CD4-positive, alpha-beta T cell (primary cell): ENCODE measurements at regions of chr9 and their contacts with region 1.

Region 1: GRCh38 chr9:113511856-113512761 is 48.6 kb downstream of the RGS3 start:
- DNase-seq: peak in 13 of 14 experiments; percentile 33 to 84 (median 52)
- ATAC-seq: peak; percentile 60
- H3K4me3 ChIP-seq: peak overlapping the region; percentile 27
- H3K4me3 Mint-ChIP-seq: peak overlapping the region; percentile 84
- H3K27ac ChIP-seq: peak overlapping the region; percentile 71 to 77
- H3K27ac Mint-ChIP-seq: peak overlapping the region; percentile 86
- H3K4me1 ChIP-seq: peaks cover 58% of the 10 kb centered on the region
- H3K4me1 Mint-ChIP-seq: peaks cover 62% of the 10 kb centered on the region
- H3K27me3 ChIP-seq: no peaks in the 10 kb centered on the region
- H3K27me3 Mint-ChIP-seq: no peaks in the 10 kb centered on the region
- CTCF ChIP-seq: no peak

Region 2: GRCh38 chr9:113488490-113488889 is 23.6 kb before region 1 on chr9:
- CTCF ChIA-PET with region 1: no interaction called
- POLR2A ChIA-PET with region 1: no interaction called
- intact Hi-C with region 1: no loop called
- DNase-seq: no peak
- ATAC-seq: no peak
- H3K4me3 ChIP-seq: no peak overlapping the region
- H3K4me3 Mint-ChIP-seq: no peak overlapping the region
- H3K27ac ChIP-seq: no peak overlapping the region
- H3K27ac Mint-ChIP-seq: no peak overlapping the region
- H3K4me1 ChIP-seq: no peaks in the 10 kb centered on the region
- H3K4me1 Mint-ChIP-seq: no peaks in the 10 kb centered on the region
- H3K27me3 ChIP-seq: no peaks in the 10 kb centered on the region
- H3K27me3 Mint-ChIP-seq: no peaks in the 10 kb centered on the region
- CTCF ChIP-seq: no peak

Region 3: DNA sequence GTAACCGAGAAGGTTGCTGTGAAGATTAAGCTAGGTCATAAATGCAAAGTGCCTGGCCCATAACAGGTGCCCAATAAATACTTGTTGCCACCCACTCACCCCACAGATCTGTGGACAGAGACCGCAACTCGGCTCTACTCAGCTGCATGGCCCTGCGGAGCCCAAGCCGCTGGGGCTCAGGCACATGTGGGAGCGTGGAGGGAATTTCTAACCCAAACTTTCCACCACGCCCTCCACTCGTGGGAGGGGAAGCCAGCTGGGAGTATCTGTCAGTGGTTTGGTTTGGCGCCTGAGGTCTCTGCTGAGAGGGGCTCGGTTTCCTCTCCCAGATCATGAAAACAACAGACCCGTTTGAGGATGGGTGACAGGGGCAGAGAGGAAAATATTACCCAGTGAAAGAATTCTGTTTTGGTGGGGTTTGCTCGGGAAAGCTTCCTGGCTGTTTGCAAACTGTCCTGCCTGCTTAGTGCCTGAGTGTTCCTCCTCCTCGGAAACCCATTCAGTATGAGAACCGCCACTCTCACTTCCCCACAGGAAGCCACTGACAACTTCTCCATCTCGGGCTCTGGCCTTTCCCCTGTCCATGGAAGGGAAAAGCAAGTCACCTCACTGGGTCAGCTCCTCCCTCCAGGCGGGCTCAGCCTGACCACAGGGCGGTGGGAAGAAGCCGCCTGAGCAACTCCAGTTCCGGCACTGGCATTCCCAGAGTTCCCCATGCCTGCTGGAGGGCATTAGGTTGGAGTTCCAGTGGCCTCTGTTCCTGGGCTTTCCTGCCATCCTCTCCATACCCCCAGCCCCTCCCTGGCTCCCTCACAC is 11.5 kb after region 1 on chr9:
- CTCF ChIA-PET with region 1: no interaction called
- POLR2A ChIA-PET with region 1: interaction called, 34 read pairs
- intact Hi-C with region 1: no loop called
- DNase-seq: peak in 11 of 14 experiments; percentile 11 to 82 (median 47)
- ATAC-seq: peak; percentile 50
- H3K4me3 ChIP-seq: peak overlapping the region; percentile 27
- H3K4me3 Mint-ChIP-seq: peak overlapping the region; percentile 70
- H3K27ac ChIP-seq: peak overlapping the region; percentile 30 to 59
- H3K27ac Mint-ChIP-seq: peak overlapping the region; percentile 78
- H3K4me1 ChIP-seq: peaks cover 72% of the 10 kb centered on the region
- H3K4me1 Mint-ChIP-seq: peaks cover 78% of the 10 kb centered on the region
- H3K27me3 ChIP-seq: no peaks in the 10 kb centered on the region
- H3K27me3 Mint-ChIP-seq: no peaks in the 10 kb centered on the region
- CTCF ChIP-seq: no peak

Region 4: GRCh38 chr9:113614843-113615648 is 102.9 kb after region 1 on chr9:
- CTCF ChIA-PET with region 1: no interaction called
- POLR2A ChIA-PET with region 1: no interaction called
- intact Hi-C with region 1: no loop called
- DNase-seq: no peak
- ATAC-seq: no peak
- H3K4me3 ChIP-seq: no peak overlapping the region
- H3K4me3 Mint-ChIP-seq: no peak overlapping the region
- H3K27ac ChIP-seq: no peak overlapping the region
- H3K27ac Mint-ChIP-seq: no peak overlapping the region
- H3K4me1 ChIP-seq: no peaks in the 10 kb centered on the region
- H3K4me1 Mint-ChIP-seq: no peaks in the 10 kb centered on the region
- H3K27me3 ChIP-seq: no peaks in the 10 kb centered on the region
- H3K27me3 Mint-ChIP-seq: no peaks in the 10 kb centered on the region
- CTCF ChIP-seq: no peak